ENCODE measurements at regions of chr15 and their contacts with region 1.

Region 1: DNA sequence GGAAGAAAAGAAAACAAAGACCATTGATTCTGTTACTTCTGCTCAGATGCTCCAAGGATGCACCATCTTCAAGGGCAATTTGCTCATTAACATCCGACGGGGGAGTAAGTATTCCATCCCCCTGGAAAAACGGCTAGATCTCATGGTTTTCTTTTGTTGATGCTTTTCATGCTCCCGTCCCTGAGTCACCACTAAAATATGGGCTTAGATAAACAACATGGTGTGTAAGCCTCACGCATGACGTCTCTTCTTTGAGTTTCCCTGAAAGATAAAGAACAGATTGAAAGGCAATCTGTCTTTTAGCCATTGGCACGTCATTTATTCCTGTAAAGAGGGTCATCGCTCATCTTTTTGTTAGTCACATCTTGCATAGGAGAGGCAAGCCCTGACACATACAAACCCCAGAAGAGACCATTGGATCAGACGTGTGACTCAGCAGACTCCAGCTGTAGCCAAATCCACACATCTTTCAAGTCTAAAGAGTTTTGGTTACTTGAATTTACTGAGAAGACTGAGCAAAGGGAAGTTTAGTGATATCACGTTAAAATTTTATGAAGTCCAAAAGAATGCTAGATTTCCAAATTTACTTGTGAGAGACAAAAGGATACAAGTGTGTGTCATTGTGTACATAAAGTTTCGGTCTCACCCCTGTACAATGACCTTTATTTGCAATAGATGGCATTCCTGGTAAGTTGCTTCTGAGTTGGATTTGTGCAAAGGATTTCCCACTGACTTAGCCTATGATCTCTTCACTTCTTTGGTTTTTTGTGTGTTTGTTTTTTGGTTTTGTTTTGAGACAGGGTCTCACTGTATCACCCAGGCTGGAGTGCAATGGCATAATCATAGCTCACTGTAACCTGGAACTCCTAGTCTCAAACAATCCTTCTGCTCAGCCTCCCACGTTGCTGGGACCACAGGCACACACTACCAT is 110.5 kb downstream of the PGPEP1L start:
- DNase-seq: no peak
- ATAC-seq: peak; percentile 66

Region 2: GRCh38 chr15:98518823-98519561 is 378.1 kb before region 1 on chr15:
- intact Hi-C with region 1: loop called (anchors 10 kb)
- DNase-seq: no peak
- ATAC-seq: peak; percentile 88

Region 3: DNA sequence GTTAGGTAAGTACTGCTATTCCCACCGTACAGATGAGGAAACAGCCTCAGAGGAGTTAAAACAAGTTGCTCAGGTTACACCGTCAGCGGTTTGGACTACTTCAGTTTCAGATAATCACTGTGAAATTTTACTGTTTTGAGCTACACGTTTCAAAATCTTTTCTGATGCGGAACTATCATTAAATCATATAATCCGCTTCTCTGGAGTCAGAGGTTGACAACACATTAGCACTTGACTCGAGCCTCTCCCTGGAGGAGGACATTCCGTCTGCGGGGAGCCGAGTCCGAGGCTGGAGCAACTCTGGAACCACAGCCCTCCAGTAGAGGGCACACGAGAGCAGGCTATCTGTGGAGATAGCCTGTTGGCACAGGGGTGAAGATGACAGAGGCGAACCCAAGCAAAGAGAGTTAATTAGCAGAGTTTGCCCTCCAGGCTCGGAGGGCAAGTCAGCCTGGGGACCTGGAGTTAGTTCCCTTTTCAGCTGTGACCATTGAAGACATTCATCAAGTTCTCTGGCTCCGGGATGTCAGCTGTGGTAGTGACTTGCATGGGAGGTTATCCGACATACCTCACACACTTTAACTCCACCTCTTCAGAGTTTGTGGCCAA is 117.5 kb before region 1 on chr15:
- intact Hi-C with region 1: no loop called
- DNase-seq: peak; percentile 87
- ATAC-seq: peak; percentile 91

Measured in Right ventricle myocardium superior (tissue), 1 donor.